ENCODE measurements at regions of chr11 and their contacts with region 1.

Region 1: GRCh38 chr11:207208-207862 is at the starts of genes BET1L and RIC8A:
- DNase-seq: peak; percentile 99
- total RNA-seq, gene BET1L: 37.5 to 39.1 TPM
- total RNA-seq, gene RIC8A: 73.8 to 87.5 TPM

Region 2: DNA sequence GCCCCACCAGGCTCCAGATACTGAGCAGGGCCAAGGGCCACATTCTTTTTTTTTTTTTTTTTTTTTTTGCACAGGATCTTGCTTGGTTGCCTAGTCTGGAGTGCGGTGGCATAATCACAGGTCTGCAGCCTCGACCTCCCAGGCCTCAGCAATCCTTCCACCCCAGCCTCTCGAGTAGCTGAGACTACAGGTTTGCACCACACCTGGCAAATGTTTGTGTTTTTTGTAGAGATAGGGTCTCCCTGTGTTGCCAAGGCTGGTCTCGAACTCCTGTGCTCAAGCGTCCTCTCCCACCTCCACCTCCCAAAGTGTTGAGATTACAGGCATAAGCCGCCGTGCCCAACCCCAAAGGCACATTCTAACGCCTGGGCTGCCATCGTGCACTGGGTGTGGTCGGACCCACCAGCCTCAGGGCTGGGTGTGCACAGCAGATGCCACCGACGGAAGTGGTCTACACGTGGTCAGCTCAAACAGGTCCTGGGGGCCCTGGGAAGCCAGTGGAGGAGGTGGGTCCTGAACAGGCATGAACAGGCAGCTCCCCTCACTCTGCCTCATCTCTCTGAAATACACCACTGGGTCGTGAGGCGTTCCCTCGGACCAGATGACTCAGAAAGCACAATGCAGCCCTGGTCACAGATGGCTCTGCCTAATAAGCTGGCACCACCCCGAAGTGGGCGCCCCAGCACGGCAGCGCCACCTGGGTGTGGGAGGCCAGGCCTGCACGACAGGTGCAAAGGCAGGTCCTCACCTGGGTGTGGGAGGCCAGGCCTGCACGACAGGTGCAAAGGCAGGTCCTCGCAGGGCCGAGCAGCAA is 156.8 kb after region 1 on chr11:
- intact Hi-C with region 1: loop called in 1 of 2 experiments (anchors 10 kb)
- DNase-seq: peak; percentile 75